ENCODE measurements at regions of chr1 and their contacts with region 1.

Region 1: GRCh38 chr1:55836086-55836485 is 620.9 kb upstream of the USP24 start:
- DNase-seq: no peak
- H3K4me3 ChIP-seq: no peak overlapping the region
- CTCF ChIP-seq: no peak

Region 2: GRCh38 chr1:55848906-55849305 is 12.8 kb after region 1 on chr1:
- CTCF ChIA-PET with region 1: interaction called, 10 read pairs
- POLR2A ChIA-PET with region 1: interaction called, 3 read pairs
- DNase-seq: no peak
- H3K4me3 ChIP-seq: no peak overlapping the region
- CTCF ChIP-seq: peak; percentile 1

Measured in AG04449 (cell line).